GM12878 (cell line): ENCODE measurements at regions of chr11 and their contacts with region 1.

Region 1: GRCh38 chr11:76598426-76598839 is 72.1 kb downstream of the LRRC32 start:
- DNase-seq: peak; percentile 12
- ATAC-seq: peak; percentile 99
- H3K4me3 ChIP-seq: no peak overlapping the region
- H3K27ac ChIP-seq: no peak overlapping the region
- H3K4me1 ChIP-seq: no peaks in the 10 kb centered on the region
- H3K27me3 ChIP-seq: peaks cover 0 to 5% of the 10 kb centered on the region in 2 experiments; a peak in 3 of 4 replicates
- CTCF ChIP-seq: peak; percentile 68 to 82 (median 80)
- EP300 ChIP-seq: no peak
- POLR2A ChIP-seq: no peak
- RAD21 ChIP-seq: peak; percentile 85

Region 2: GRCh38 chr11:76225122-76225611 is 373.3 kb before region 1 on chr11:
- CTCF ChIA-PET with region 1: no interaction called
- POLR2A ChIA-PET with region 1: no interaction called
- RAD21 ChIA-PET with region 1: no interaction called
- SMC1A ChIA-PET with region 1: no interaction called
- in situ Hi-C with region 1: no loop called
- intact Hi-C with region 1: no loop called
- DNase-seq: no peak
- ATAC-seq: no peak
- H3K4me3 ChIP-seq: no peak overlapping the region
- H3K27ac ChIP-seq: no peak overlapping the region
- H3K4me1 ChIP-seq: no peaks in the 10 kb centered on the region
- H3K27me3 ChIP-seq: no peaks in the 10 kb centered on the region; a peak in 1 of 4 replicates
- CTCF ChIP-seq: no peak
- EP300 ChIP-seq: no peak
- POLR2A ChIP-seq: no peak
- RAD21 ChIP-seq: no peak

Region 3: DNA sequence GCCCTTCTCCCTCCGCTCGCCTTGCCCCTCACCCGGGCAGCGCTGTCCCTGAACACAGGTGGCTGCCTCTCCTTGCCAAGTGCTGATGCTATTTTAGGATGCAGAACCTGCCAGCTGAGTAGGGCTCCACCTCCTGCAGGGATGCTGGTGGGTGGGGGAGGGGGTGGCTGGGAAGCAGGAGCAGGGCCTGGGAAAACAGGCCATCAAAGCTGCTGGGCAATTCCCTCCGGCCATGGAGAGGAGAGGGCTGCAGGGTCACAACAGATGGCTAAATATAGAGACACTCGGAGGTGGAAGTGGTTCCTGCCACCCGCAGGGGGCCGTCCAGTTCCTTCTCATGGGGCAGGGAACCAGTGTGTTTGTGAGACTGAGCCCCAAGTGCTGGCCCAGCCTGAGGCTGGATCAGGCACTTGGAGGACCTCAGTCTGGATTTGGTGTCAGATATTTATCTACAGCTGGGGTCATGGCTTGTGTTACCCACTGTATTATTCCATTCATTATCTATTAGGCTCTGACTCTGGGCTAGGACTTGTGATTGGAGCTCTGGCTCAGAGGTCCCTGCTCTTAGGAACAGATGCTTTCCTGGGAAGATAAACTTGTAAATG is 12.5 kb after region 1 on chr11:
- CTCF ChIA-PET with region 1: interaction called, 11 read pairs
- POLR2A ChIA-PET with region 1: interaction called, 4 read pairs
- RAD21 ChIA-PET with region 1: interaction called, 9 read pairs
- SMC1A ChIA-PET with region 1: interaction called, 15 read pairs
- in situ Hi-C with region 1: no loop called
- intact Hi-C with region 1: no loop called
- DNase-seq: no peak
- ATAC-seq: peak; percentile 78
- H3K4me3 ChIP-seq: no peak overlapping the region
- H3K27ac ChIP-seq: no peak overlapping the region
- H3K4me1 ChIP-seq: no peaks in the 10 kb centered on the region
- H3K27me3 ChIP-seq: no peaks in the 10 kb centered on the region
- CTCF ChIP-seq: peak in 1 of 3 experiments; percentile 48; a peak in 2 of 6 replicates
- EP300 ChIP-seq: no peak
- POLR2A ChIP-seq: no peak
- RAD21 ChIP-seq: no peak

Region 4: DNA sequence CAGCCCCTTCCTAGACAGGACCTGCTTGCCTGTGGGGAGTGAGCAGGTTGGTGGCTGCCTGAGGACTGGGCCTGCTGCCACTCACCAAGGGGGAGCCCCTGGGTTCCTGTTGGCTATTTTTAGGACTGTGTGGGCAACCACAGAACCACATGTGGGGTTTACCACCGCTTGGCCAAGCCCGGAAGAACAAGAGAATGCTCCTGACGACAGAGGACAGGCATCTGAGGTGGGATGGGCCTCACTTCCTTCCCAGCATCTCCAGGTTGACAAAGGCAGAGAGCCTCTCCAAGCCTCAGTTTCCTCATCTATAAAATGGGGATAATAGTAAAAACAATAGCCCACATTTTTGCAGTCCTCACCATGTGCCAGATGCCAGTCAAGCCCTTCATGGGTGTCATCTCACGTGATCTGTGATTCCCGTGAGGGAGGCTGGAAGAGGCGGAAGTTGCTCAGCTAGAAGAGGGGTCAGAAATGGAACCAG is 28.5 kb after region 1 on chr11:
- CTCF ChIA-PET with region 1: interaction called, 15 read pairs
- POLR2A ChIA-PET with region 1: no interaction called
- RAD21 ChIA-PET with region 1: interaction called, 16 read pairs
- SMC1A ChIA-PET with region 1: interaction called, 8 read pairs
- in situ Hi-C with region 1: no loop called
- intact Hi-C with region 1: no loop called
- DNase-seq: peak; percentile 88
- ATAC-seq: peak; percentile 79
- H3K4me3 ChIP-seq: no peak overlapping the region
- H3K27ac ChIP-seq: no peak overlapping the region
- H3K4me1 ChIP-seq: peaks cover 41% of the 10 kb centered on the region
- H3K27me3 ChIP-seq: peaks cover 0 to 13% of the 10 kb centered on the region in 2 experiments; a peak in 1 of 4 replicates
- CTCF ChIP-seq: no peak
- EP300 ChIP-seq: peak; percentile 66 to 85
- POLR2A ChIP-seq: no peak
- RAD21 ChIP-seq: no peak

Region 5: DNA sequence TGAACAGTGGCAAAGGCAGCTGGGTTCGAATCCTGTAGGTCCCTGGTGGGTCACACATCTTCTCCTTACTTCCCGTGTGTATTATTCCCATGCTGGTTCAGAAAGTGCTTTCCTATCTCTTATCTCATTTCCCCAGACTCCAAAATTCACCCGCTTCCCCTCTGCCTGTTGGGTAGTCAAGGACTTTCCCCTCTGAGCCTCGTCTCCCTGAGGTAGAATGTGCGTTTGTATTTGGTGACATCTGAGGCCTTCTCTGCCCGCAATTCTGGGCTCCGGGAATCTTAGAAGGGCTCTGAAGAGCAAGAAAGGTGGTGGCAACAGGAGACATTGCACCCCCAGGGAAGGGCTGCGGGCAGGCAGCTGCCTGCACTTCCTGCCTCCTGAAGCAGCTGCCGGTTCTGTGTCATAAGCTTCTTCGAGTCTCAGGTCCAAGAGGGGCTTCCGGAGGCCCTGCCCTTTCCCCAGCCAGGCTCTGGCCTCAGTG is 66.2 kb after region 1 on chr11:
- CTCF ChIA-PET with region 1: interaction called, 273 read pairs
- POLR2A ChIA-PET with region 1: no interaction called
- RAD21 ChIA-PET with region 1: interaction called, 187 read pairs
- SMC1A ChIA-PET with region 1: interaction called, 21 read pairs
- in situ Hi-C with region 1: no loop called
- intact Hi-C with region 1: no loop called
- DNase-seq: no peak
- ATAC-seq: peak; percentile 35
- H3K4me3 ChIP-seq: no peak overlapping the region
- H3K27ac ChIP-seq: no peak overlapping the region
- H3K4me1 ChIP-seq: peaks cover 35% of the 10 kb centered on the region
- H3K27me3 ChIP-seq: peaks cover under 1 to 2% of the 10 kb centered on the region in 2 experiments; a peak in 3 of 4 replicates
- CTCF ChIP-seq: no peak
- EP300 ChIP-seq: no peak
- POLR2A ChIP-seq: no peak
- RAD21 ChIP-seq: no peak

Region 6: DNA sequence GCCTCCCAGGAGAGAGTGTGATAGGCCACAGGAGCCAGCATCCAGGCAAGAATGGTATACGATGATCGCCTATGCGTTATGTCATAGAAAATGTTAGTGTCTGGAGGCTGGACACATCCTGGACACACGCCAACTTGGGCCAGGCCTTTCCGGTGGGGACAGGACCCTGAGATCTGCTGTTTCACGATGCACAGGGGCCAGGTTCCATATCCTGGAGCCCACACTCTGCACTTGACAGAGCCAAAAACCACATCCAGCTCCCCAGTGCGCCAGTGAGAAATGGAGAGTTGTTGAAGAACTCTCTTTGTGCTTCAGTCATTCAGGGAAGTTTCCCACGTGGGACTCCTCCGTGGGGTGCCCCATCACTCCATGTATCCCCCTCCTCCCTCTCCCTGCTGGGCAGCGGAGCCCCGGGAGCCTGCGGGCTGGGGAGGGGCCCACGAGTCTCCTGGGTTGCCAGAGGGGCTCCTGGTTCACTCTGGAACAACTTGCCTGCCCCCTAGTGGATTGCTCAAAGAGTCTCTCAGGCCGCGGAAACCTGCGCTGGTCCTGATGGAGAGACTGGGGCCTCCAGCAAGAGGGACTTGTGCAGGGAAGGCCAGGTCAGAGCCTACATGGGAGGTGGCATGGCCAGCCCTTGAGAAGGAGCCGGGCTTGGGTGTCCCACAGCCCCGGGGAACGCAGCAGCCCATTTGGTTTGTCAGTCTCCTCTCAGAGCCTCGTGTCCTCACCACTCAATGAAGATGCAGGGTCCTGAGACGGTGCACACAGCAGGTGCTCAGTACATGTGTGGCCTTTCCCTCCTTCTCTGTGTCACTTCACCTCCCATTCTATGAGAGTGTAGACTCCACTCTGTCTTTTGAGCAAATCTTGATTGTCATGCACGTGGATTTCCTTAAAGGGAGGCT is 82.3 kb after region 1 on chr11:
- CTCF ChIA-PET with region 1: interaction called, 273 read pairs
- POLR2A ChIA-PET with region 1: no interaction called
- RAD21 ChIA-PET with region 1: interaction called, 187 read pairs
- SMC1A ChIA-PET with region 1: interaction called, 76 read pairs
- in situ Hi-C with region 1: no loop called
- intact Hi-C with region 1: loop called (anchors 1 kb)
- DNase-seq: no peak
- ATAC-seq: peak; percentile 91
- H3K4me3 ChIP-seq: no peak overlapping the region
- H3K27ac ChIP-seq: no peak overlapping the region
- H3K4me1 ChIP-seq: peaks cover 7% of the 10 kb centered on the region
- H3K27me3 ChIP-seq: no peaks in the 10 kb centered on the region; a peak in 1 of 4 replicates
- CTCF ChIP-seq: peak; percentile 71 to 92 (median 87); a peak in 5 of 6 replicates
- EP300 ChIP-seq: no peak
- POLR2A ChIP-seq: no peak
- RAD21 ChIP-seq: peak; percentile 92

Region 7: GRCh38 chr11:76686261-76687079 is 88.0 kb after region 1 on chr11:
- CTCF ChIA-PET with region 1: interaction called, 273 read pairs
- POLR2A ChIA-PET with region 1: interaction called, 3 read pairs
- RAD21 ChIA-PET with region 1: interaction called, 25 read pairs
- SMC1A ChIA-PET with region 1: interaction called, 76 read pairs
- in situ Hi-C with region 1: no loop called
- intact Hi-C with region 1: no loop called
- DNase-seq: no peak
- ATAC-seq: peak; percentile 82
- H3K4me3 ChIP-seq: no peak overlapping the region
- H3K27ac ChIP-seq: no peak overlapping the region
- H3K4me1 ChIP-seq: peaks cover 14% of the 10 kb centered on the region
- H3K27me3 ChIP-seq: peaks cover 0 to 7% of the 10 kb centered on the region in 2 experiments; a peak in 2 of 4 replicates
- CTCF ChIP-seq: no peak
- EP300 ChIP-seq: no peak
- POLR2A ChIP-seq: no peak
- RAD21 ChIP-seq: no peak